Transverse colon (tissue), 4 donors: ENCODE measurements at regions of chr4 and their contacts with region 1.

Region 1: GRCh38 chr4:162038112-162038511 is 125.7 kb downstream of the FSTL5 start:
- DNase-seq: no peak
- H3K4me3 ChIP-seq: no peak overlapping the region
- H3K27ac ChIP-seq: no peak overlapping the region
- H3K4me1 ChIP-seq: no peaks in the 10 kb centered on the region
- H3K27me3 ChIP-seq: no peaks in the 10 kb centered on the region
- CTCF ChIP-seq: no peak
- EP300 ChIP-seq: no peak
- POLR2A ChIP-seq: no peak

Region 2: GRCh38 chr4:162011089-162011488 is 27.0 kb before region 1 on chr4:
- in situ Hi-C with region 1: no loop called
- intact Hi-C with region 1: loop called (anchors 2 kb)
- DNase-seq: no peak
- H3K4me3 ChIP-seq: no peak overlapping the region
- H3K27ac ChIP-seq: no peak overlapping the region
- H3K4me1 ChIP-seq: no peaks in the 10 kb centered on the region
- H3K27me3 ChIP-seq: no peaks in the 10 kb centered on the region
- CTCF ChIP-seq: no peak
- EP300 ChIP-seq: no peak
- POLR2A ChIP-seq: no peak